ENCODE measurements at regions of chr3 and their contacts with region 1.

Region 1: GRCh38 chr3:58414538-58415197 is 19.0 kb downstream of the PDHB start:
- DNase-seq: peak; percentile 42
- H3K4me3 Mint-ChIP-seq: no peak overlapping the region
- H3K27ac Mint-ChIP-seq: no peak overlapping the region
- H3K4me1 Mint-ChIP-seq: peaks cover 12% of the 10 kb centered on the region
- H3K27me3 Mint-ChIP-seq: no peaks in the 10 kb centered on the region

Region 2: GRCh38 chr3:57309769-57310360 is 1104.8 kb before region 1 on chr3:
- intact Hi-C with region 1: no loop called
- DNase-seq: no peak
- H3K4me3 Mint-ChIP-seq: no peak overlapping the region
- H3K27ac Mint-ChIP-seq: no peak overlapping the region
- H3K4me1 Mint-ChIP-seq: no peaks in the 10 kb centered on the region
- H3K27me3 Mint-ChIP-seq: peaks cover 7% of the 10 kb centered on the region

Region 3: DNA sequence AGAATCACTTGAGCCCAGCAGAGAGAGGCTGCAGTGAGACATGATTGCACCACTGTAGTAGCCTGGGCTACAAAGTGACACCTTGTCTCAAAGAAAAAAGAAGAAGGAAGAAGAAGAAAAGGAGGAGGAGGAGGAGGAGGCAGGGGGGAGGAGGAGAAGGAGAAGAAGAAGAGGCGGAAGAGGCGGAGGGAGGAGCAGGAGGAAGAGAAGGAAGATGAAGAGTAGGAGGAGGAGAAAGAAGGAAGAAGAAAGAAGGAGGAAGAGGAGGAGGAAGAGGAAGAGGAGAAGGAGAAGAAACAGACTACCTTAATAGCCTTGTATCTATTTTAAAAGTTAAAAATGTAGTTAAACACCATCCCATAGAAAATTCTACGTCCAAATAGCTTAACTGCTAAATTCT is 798.4 kb before region 1 on chr3:
- intact Hi-C with region 1: no loop called
- DNase-seq: no peak
- H3K4me3 Mint-ChIP-seq: no peak overlapping the region
- H3K27ac Mint-ChIP-seq: no peak overlapping the region
- H3K4me1 Mint-ChIP-seq: no peaks in the 10 kb centered on the region
- H3K27me3 Mint-ChIP-seq: no peaks in the 10 kb centered on the region

Region 4: GRCh38 chr3:58188173-58188564 is 226.5 kb before region 1 on chr3:
- intact Hi-C with region 1: loop called (anchors 1 kb)
- DNase-seq: no peak
- H3K4me3 Mint-ChIP-seq: no peak overlapping the region
- H3K27ac Mint-ChIP-seq: no peak overlapping the region
- H3K4me1 Mint-ChIP-seq: no peaks in the 10 kb centered on the region
- H3K27me3 Mint-ChIP-seq: no peaks in the 10 kb centered on the region

Region 5: DNA sequence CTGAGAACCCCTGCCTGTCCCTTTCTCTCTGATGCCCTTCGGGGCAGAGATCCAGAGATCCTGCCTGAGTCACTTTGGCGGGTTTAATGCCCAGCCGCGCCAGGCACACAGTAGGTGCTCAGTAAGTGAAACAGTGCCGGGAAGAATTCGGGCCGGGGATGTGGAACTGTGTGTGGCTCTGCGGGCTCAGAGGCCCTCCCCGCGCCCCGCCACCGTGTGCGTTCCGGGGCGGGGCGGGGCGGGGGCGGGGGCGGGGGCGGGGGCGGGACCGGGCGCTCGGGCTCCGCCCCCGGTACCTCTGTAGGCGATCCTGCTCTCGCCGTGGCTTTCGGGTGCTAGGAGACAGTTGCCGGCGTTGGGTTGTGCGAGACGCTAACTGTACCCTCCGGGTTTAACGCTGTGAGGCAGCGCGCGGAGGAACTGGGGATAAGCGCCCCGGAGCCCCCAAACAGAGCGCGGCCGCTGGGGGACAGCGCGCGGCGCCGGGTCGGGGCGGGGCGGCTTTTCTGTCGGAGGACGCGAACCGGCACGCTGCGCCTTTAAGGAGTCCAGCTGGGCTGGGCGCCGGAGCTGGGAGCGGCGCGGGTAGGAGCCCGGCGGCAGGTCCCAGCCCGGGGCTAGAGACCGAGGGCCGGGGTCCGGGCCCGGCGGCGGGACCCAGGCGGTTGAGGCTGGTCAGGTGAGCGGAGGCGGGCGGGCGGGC is 177.3 kb before region 1 on chr3 and contains the start of gene ABHD6:
- intact Hi-C with region 1: loop called (anchors 2 kb)
- DNase-seq: peak; percentile 78
- H3K4me3 Mint-ChIP-seq: peak within 1 kb of the TSS; percentile 90
- H3K27ac Mint-ChIP-seq: peak within 1 kb of the TSS; percentile 67
- H3K4me1 Mint-ChIP-seq: peaks cover 12% of the 10 kb centered on the region
- H3K27me3 Mint-ChIP-seq: peaks cover 32% of the 10 kb centered on the region
- total RNA-seq, gene ABHD6: 9.2 and 10.1 TPM in 2 replicates

Region 6: DNA sequence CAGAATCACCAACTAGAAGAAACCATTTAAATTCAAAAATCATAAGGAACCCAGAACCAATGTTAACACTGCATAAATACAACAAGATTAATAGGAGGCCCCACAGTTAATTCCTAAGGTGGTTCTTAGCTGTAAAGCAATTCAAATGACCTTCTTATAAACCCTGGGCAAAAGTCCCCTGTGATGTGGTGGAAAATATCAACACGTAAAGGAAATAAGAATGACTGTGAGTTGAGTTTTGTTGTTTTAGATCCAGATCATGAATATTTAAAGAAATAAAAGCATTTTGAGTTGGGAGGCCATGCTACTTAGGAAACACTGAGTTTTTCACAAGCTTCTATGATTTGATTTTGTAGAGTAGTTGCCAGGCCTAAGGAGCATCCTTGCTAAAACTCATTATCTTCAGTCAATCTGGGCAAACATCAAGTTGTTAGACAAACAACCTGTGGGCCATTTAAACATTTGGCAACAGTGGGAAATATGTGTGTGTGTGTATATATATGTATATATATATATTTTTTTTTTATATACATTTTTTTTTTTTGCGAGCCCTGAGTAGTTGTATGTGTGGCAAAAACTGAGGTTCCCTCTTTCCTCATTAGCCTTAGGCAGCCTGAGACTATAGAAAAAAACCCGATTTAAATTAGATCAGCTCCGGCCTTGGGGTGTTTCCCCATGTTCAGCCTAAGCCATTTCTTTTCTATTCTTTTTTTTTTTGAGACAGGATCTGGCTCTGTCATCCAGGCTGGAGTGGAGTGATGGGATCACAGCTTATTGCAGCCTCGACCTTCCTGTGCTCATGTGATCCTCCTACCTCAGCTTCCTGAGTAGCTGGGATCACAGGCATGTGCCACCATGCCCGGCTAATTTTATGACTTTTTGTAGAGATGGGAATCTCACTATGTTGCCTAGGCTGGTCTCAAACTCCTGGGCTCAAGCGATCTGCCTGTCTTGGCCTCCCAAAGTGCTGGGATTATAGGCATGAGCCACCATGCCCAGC is 90.0 kb before region 1 on chr3:
- intact Hi-C with region 1: loop called (anchors 1 kb)
- DNase-seq: peak; percentile 6
- H3K4me3 Mint-ChIP-seq: peak overlapping the region; percentile 6
- H3K27ac Mint-ChIP-seq: peak overlapping the region; percentile 86
- H3K4me1 Mint-ChIP-seq: peaks cover 31% of the 10 kb centered on the region
- H3K27me3 Mint-ChIP-seq: no peaks in the 10 kb centered on the region

Region 7: DNA sequence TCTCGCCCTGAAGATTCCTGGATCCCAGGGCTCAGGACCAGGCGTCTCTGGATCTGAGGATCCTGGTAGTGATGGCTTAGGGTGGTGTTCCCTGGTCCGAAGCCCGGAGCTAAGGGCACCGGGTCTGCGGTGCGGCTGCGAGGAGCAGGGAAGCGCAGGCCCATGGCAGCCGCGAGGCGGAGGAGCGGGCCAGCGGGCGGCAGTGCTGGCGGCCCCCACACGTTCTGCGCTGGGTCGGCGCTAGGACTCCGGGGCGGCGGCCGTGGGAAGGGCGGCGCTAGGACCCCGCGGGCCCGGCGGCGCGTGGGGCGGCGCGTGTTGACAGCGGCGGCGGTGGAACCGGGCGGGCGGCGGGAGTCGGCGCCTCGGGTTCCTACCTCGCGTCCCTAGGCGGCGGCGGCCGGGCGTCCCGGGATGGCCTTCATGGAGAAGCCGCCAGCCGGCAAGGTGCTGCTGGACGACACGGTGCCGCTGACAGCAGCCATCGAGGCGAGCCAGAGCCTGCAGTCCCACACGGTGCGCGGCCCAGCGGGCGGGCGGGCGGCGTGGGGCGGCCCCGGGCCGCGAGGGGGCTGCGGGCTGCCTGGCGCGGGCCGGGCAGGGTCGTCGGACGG is 82.0 kb before region 1 on chr3 and contains the start of gene PXK:
- intact Hi-C with region 1: loop called (anchors 1 kb)
- DNase-seq: peak; percentile 83
- H3K4me3 Mint-ChIP-seq: peak within 1 kb of the TSS; percentile 100
- H3K27ac Mint-ChIP-seq: peak within 1 kb of the TSS; percentile 99
- H3K4me1 Mint-ChIP-seq: peaks cover 48% of the 10 kb centered on the region
- H3K27me3 Mint-ChIP-seq: no peaks in the 10 kb centered on the region
- total RNA-seq, gene PXK: 43.4 and 48.1 TPM in 2 replicates

Region 8: GRCh38 chr3:58349792-58350626 is 64.7 kb before region 1 on chr3:
- intact Hi-C with region 1: loop called (anchors 1 kb)
- DNase-seq: peak; percentile 37
- H3K4me3 Mint-ChIP-seq: peak overlapping the region; percentile 71
- H3K27ac Mint-ChIP-seq: peak overlapping the region; percentile 88
- H3K4me1 Mint-ChIP-seq: peaks cover 78% of the 10 kb centered on the region
- H3K27me3 Mint-ChIP-seq: no peaks in the 10 kb centered on the region

Region 9: GRCh38 chr3:58532794-58533220 is 118.1 kb after region 1 on chr3:
- intact Hi-C with region 1: loop called (anchors 1 kb)
- DNase-seq: peak; percentile 75
- H3K4me3 Mint-ChIP-seq: no peak overlapping the region
- H3K27ac Mint-ChIP-seq: peak overlapping the region; percentile 8
- H3K4me1 Mint-ChIP-seq: peaks cover 13% of the 10 kb centered on the region
- H3K27me3 Mint-ChIP-seq: peaks cover 15% of the 10 kb centered on the region

Measured in activated T-helper 1 cell treated with anti-CD3 and anti-CD28 coated beads, Interleukin-12 subunit alpha, Interleukin-12 subunit beta, Interleukin-2, Interleukin-4 antibody, amounts not matched to agents 30 ng/mL and 10 ng/mL and 1 ng/mL, durations not matched to agents 14 hours and 24 hours and 36 hours (primary cell).